ENCODE measurements at regions of chr3 and their contacts with region 1.

Region 1: GRCh38 chr3:167397826-167398225 is 17.7 kb upstream of the ZBBX start:
- DNase-seq: no peak
- H3K4me3 Mint-ChIP-seq: no peak overlapping the region
- H3K27ac Mint-ChIP-seq: no peak overlapping the region
- H3K4me1 Mint-ChIP-seq: no peaks in the 10 kb centered on the region
- H3K27me3 Mint-ChIP-seq: no peaks in the 10 kb centered on the region

Region 2: GRCh38 chr3:167882067-167882667 is 484.3 kb after region 1 on chr3:
- intact Hi-C with region 1: loop called (anchors 5 kb)
- DNase-seq: no peak
- H3K4me3 Mint-ChIP-seq: no peak overlapping the region
- H3K27ac Mint-ChIP-seq: no peak overlapping the region
- H3K4me1 Mint-ChIP-seq: no peaks in the 10 kb centered on the region
- H3K27me3 Mint-ChIP-seq: peaks cover 12% of the 10 kb centered on the region